Calu3 (cell line): ENCODE measurements at regions of chr7 and their contacts with region 1.

Region 1: GRCh38 chr7:73726083-73726466 is 6.6 kb upstream of the STX1A start:
- DNase-seq: no peak
- H3K4me3 Mint-ChIP-seq: no peak overlapping the region
- H3K27ac Mint-ChIP-seq: no peak overlapping the region
- H3K4me1 Mint-ChIP-seq: no peaks in the 10 kb centered on the region
- H3K27me3 Mint-ChIP-seq: no peaks in the 10 kb centered on the region
- CTCF ChIP-seq: no peak

Region 2: DNA sequence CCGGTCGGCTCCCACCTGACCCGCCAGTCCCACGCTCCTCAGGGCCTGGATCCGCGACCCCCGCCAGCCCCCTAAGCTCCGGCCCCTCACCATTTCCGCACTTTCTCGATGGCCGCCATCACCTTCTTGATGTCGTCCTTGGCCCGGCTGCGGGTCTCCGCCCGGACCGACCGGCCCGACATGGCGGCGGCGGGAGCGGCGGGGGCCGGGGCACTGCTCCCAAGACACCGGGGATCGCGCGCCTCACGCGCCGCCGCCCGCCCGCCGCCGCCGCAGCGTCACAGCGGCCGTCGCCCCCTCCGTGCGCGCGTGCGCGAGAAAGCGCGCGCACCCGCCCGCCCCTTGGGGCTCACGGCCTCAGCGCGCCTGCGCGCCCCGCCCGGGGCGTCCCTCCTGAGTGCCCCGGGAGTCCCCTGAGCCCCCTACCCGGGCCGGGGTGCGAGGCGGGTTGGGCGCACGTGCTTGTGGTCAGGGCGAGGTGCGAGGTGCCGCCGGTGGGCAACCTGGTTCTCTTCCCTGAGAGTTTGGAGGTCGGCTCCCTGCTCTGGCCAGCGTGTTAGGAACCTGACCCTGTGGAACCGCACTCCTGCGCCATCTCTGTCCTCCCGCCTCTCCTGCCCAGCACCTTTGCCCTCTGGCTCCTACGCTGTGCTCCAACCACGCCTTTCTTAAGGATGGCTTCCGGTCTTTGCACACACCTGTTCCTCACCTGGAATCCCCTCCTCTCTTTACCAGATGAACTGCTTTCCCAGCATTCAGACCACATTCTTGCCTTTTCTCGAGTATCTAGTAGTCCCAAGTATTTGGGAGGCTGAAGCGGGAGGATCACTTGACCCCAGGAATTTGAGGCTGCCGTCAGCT is 168.4 kb before region 1 on chr7 and contains the start of gene BCL7B:
- CTCF ChIA-PET with region 1: no interaction called
- intact Hi-C with region 1: no loop called
- DNase-seq: peak; percentile 73
- H3K4me3 Mint-ChIP-seq: peak within 1 kb of the TSS; percentile 74
- H3K27ac Mint-ChIP-seq: peak within 1 kb of the TSS; percentile 97
- H3K4me1 Mint-ChIP-seq: peaks cover 23% of the 10 kb centered on the region
- H3K27me3 Mint-ChIP-seq: no peaks in the 10 kb centered on the region
- CTCF ChIP-seq: no peak
- total RNA-seq, gene BCL7B: 37.8 and 44.6 TPM in 2 replicates

Region 3: GRCh38 chr7:73606801-73607691 is 119.0 kb before region 1 on chr7:
- CTCF ChIA-PET with region 1: interaction called, 11 read pairs
- intact Hi-C with region 1: loop called (anchors 2 kb)
- DNase-seq: peak; percentile 62
- H3K4me3 Mint-ChIP-seq: no peak overlapping the region
- H3K27ac Mint-ChIP-seq: no peak overlapping the region
- H3K4me1 Mint-ChIP-seq: no peaks in the 10 kb centered on the region
- H3K27me3 Mint-ChIP-seq: peaks cover 6% of the 10 kb centered on the region
- CTCF ChIP-seq: peak; percentile 92

Region 4: DNA sequence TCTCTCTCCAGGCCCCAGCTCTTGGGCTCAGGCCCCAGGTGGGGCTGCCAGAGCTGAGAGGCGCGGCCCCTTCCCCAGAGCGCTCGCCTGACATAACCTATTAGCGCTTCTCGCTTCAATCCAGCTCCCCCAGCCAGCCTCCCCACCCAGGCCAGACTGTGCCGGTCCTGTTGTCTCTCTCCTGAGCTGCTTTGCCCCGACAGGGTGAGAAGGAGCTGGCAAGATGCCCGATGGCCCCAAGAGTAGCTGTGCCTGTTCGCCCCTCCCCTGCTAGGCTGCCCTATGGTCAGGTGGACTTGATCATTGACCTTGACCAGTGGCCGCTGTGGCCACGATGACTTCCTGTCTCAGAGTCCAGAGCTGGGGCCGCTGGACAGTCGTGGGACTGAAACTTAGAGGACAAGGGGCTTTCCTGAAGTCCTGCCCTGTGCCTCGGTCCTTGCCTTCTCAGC is 144.0 kb after region 1 on chr7:
- CTCF ChIA-PET with region 1: no interaction called
- intact Hi-C with region 1: no loop called
- DNase-seq: no peak
- H3K4me3 Mint-ChIP-seq: no peak overlapping the region
- H3K27ac Mint-ChIP-seq: no peak overlapping the region
- H3K4me1 Mint-ChIP-seq: no peaks in the 10 kb centered on the region
- H3K27me3 Mint-ChIP-seq: no peaks in the 10 kb centered on the region
- CTCF ChIP-seq: no peak